ENCODE measurements at regions of chr17 and their contacts with region 1.

Region 1: DNA sequence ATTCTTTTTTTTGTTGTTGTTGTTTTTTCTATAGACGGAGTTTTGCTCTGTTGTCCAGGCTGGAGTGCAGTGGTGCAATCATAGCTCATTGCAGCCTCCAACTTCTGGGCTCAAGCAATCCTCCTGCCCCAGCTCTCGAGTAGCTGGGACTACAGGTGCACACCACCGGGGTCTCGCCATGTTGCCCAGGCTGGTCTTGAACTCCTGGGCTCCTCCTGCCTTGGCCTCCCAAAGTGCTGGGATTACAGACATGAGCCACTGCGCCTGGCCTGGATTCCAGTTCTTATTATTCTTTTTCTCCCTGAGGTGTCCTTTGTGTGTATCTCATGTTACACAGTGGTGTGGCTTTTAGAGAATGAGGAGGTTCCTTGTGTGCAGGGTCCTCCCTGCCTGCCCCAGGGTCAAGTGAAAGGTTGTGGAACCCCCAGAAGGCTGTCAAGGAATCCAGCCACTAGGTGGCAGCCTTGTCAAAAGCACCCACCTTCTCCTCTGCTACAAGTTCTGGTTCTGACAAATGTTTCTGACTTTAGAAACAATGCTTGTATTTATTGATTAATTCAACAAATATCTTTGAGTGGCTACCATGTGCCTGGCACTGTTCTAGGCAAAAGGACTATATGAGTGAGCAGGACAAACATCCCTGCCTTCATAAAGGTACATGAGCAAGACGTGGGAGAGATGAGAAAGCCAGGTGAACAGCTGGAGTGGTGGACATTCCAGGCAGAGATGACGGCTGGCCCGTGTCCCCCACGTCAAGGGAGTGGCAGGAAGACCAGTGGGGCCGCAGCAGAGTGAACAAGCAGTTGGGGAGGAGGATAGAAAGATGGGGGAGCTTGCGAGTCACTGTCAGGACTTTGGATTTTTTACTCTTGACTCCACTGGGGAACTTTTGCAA is 112.4 kb downstream of the SPECC1 start:
- DNase-seq: peak in 3 of 4 donors; percentile 26 to 57 (median 46)
- ATAC-seq: peak; percentile 88
- H3K4me3 ChIP-seq: no peak overlapping the region
- H3K27ac ChIP-seq: no peak overlapping the region
- H3K4me1 ChIP-seq: peaks cover 0 to 6% of the 10 kb centered on the region in 2 donors
- H3K27me3 ChIP-seq: peaks cover 0 to 7% of the 10 kb centered on the region in 2 donors
- CTCF ChIP-seq: peak; percentile 80 to 93

Region 2: GRCh38 chr17:19948113-19948943 is 173.3 kb before region 1 on chr17:
- intact Hi-C with region 1: no loop called
- DNase-seq: no peak
- ATAC-seq: peak; percentile 37
- H3K4me3 ChIP-seq: no peak overlapping the region
- H3K27ac ChIP-seq: peak overlapping the region in 1 of 2 donors; percentile 13
- H3K4me1 ChIP-seq: peaks cover 6 to 30% of the 10 kb centered on the region in 2 donors
- H3K27me3 ChIP-seq: no peaks in the 10 kb centered on the region
- CTCF ChIP-seq: no peak

Region 3: GRCh38 chr17:19992803-19993713 is 128.5 kb before region 1 on chr17:
- intact Hi-C with region 1: loop called in 1 of 2 experiments (anchors 5 kb)
- DNase-seq: peak; percentile 83 to 96 (median 90)
- ATAC-seq: peak; percentile 100
- H3K4me3 ChIP-seq: no peak overlapping the region
- H3K27ac ChIP-seq: no peak overlapping the region
- H3K4me1 ChIP-seq: peaks cover 4 to 6% of the 10 kb centered on the region in 2 donors
- H3K27me3 ChIP-seq: peaks cover 0 to 6% of the 10 kb centered on the region in 2 donors
- CTCF ChIP-seq: peak; percentile 75 to 90

Region 4: GRCh38 chr17:20226814-20227482 is 105.3 kb after region 1 on chr17:
- intact Hi-C with region 1: loop called in 1 of 2 experiments (anchors 10 kb)
- DNase-seq: peak; percentile 74 to 88 (median 85)
- ATAC-seq: peak; percentile 100
- H3K4me3 ChIP-seq: no peak overlapping the region
- H3K27ac ChIP-seq: no peak overlapping the region
- H3K4me1 ChIP-seq: no peaks in the 10 kb centered on the region
- H3K27me3 ChIP-seq: no peaks in the 10 kb centered on the region
- CTCF ChIP-seq: peak; percentile 64 to 79